T-cell (primary cell): ENCODE measurements at regions of chr9 and their contacts with region 1.

Region 1: GRCh38 chr9:129038109-129038852 is 1.9 kb downstream of the MIGA2 start:
- DNase-seq: no peak
- ATAC-seq: no peak
- H3K4me3 ChIP-seq: no peak overlapping the region
- H3K4me3 Mint-ChIP-seq: peak overlapping the region; percentile 95 to 99 (median 95)
- H3K27ac ChIP-seq: no peak overlapping the region
- H3K27ac Mint-ChIP-seq: no peak overlapping the region
- H3K4me1 ChIP-seq: peaks cover 10 to 31% of the 10 kb centered on the region in 2 experiments
- H3K4me1 Mint-ChIP-seq: peaks cover 31 to 39% (median 36%) of the 10 kb centered on the region in 3 donors
- H3K27me3 ChIP-seq: no peaks in the 10 kb centered on the region
- H3K27me3 Mint-ChIP-seq: no peaks in the 10 kb centered on the region

Region 2: DNA sequence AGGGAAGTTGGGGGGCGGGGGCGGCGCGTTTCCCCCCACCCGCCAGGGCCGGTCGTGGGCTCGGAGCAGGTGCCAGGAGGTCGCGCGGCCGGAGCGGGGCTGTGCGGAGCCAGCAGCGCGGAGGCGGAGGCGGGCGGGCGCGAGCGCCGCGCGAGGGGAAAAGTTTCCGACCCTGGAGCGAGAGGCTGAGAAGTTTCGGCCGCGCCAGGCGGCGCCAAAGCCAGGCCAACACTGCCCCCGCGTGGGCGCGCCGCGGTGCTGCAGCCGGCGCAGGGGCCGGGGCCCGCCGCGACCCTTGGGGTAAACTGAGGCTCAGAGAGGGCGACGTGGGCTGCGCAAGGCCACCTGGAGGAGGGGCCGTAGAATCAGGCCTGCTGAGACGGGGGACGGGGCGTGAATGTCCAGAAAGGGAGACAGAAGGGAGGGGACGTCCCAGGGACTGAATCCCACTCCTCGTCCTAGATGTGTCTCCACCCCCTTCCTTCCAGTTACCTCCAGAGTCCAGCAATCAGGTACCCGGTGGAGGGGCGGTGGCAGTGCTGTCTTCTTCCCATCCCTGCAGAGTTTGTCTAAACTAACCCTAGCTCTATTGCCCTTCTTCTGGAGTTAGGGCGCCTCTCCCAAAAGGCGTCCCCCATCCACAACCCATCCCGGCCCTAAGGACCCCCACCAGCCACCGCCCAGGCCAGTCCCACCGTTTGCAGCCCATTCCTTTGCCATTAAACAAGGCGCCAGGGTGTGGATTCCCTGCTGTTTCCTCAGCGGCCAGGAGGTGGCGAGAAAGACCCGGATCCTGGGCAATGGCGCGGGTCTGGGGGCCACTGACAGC is 572.4 kb after region 1 on chr9:
- CTCF ChIA-PET with region 1: interaction called in 1 of 2 experiments, 11 read pairs
- POLR2A ChIA-PET with region 1: no interaction called
- DNase-seq: peak; percentile 36 to 83 (median 62)
- ATAC-seq: peak; percentile 69 to 81 (median 74)
- H3K4me3 ChIP-seq: peak overlapping the region; percentile 48 to 71
- H3K4me3 Mint-ChIP-seq: peak overlapping the region; percentile 71 to 93 (median 76)
- H3K27ac ChIP-seq: no peak overlapping the region
- H3K27ac Mint-ChIP-seq: peak overlapping the region in 1 of 2 donors; percentile 70
- H3K4me1 ChIP-seq: peaks cover 10 to 45% of the 10 kb centered on the region in 2 experiments
- H3K4me1 Mint-ChIP-seq: peaks cover 25 to 36% (median 32%) of the 10 kb centered on the region in 3 donors
- H3K27me3 ChIP-seq: peaks cover 0 to 42% of the 10 kb centered on the region in 2 experiments
- H3K27me3 Mint-ChIP-seq: no peaks in the 10 kb centered on the region

Region 3: GRCh38 chr9:130199605-130200004 is 1161.3 kb after region 1 on chr9:
- CTCF ChIA-PET with region 1: no interaction called
- POLR2A ChIA-PET with region 1: no interaction called
- DNase-seq: no peak
- ATAC-seq: no peak
- H3K4me3 ChIP-seq: no peak overlapping the region
- H3K4me3 Mint-ChIP-seq: no peak overlapping the region
- H3K27ac ChIP-seq: no peak overlapping the region
- H3K27ac Mint-ChIP-seq: no peak overlapping the region
- H3K4me1 ChIP-seq: no peaks in the 10 kb centered on the region
- H3K4me1 Mint-ChIP-seq: no peaks in the 10 kb centered on the region
- H3K27me3 ChIP-seq: peaks cover 0 to 3% of the 10 kb centered on the region in 2 experiments
- H3K27me3 Mint-ChIP-seq: no peaks in the 10 kb centered on the region